ENCODE measurements at regions of chr20 and their contacts with region 1.

Region 1: GRCh38 chr20:34562643-34563042 is 4.1 kb downstream of the MAP1LC3A start:
- DNase-seq: peak; percentile 39 to 51
- ATAC-seq: peak; percentile 48 to 67; a peak in 4 of 6 replicates
- H3K4me3 ChIP-seq: no peak overlapping the region
- H3K27ac ChIP-seq: no peak overlapping the region
- H3K4me1 ChIP-seq: peaks cover 10% of the 10 kb centered on the region; the same call in 2 of the 3 replicates
- CTCF ChIP-seq: peak; percentile 24; the same call in 2 of the 3 replicates
- EP300 ChIP-seq: no peak
- POLR2A ChIP-seq: no peak
- RAD21 ChIP-seq: peak; percentile 36; a peak in 4 of 5 replicates

Region 2: DNA sequence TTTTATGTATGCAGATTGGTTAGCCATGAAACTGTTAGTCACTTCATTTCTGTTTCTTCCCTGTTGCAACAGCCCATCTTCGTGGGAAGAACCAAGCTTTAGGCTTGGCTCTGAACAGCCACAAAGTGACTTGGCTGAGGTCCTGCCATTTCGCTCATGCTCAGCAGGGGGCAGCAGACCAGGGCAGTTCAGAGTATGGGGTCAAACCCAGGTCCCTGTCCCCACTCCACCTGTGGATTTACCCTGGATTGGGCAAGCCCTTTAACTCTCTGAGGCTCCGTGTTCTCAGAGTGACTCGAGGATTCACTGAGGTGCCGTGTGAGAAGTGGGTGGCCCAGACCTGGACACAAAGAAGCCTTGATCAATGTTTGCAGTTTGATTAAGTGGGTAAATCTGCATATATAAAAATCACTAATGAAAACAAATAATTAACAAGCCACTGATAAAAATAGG is 23.9 kb before region 1 on chr20:
- CTCF ChIA-PET with region 1: interaction called, 13 read pairs
- POLR2A ChIA-PET with region 1: no interaction called
- DNase-seq: peak in 1 of 2 experiments; percentile 64
- ATAC-seq: peak; percentile 52 to 69; a peak in 3 of 6 replicates
- H3K4me3 ChIP-seq: no peak overlapping the region
- H3K27ac ChIP-seq: no peak overlapping the region
- H3K4me1 ChIP-seq: no peaks in the 10 kb centered on the region
- CTCF ChIP-seq: peak; percentile 72
- EP300 ChIP-seq: no peak
- POLR2A ChIP-seq: no peak
- RAD21 ChIP-seq: peak; percentile 49 to 59

Region 3: DNA sequence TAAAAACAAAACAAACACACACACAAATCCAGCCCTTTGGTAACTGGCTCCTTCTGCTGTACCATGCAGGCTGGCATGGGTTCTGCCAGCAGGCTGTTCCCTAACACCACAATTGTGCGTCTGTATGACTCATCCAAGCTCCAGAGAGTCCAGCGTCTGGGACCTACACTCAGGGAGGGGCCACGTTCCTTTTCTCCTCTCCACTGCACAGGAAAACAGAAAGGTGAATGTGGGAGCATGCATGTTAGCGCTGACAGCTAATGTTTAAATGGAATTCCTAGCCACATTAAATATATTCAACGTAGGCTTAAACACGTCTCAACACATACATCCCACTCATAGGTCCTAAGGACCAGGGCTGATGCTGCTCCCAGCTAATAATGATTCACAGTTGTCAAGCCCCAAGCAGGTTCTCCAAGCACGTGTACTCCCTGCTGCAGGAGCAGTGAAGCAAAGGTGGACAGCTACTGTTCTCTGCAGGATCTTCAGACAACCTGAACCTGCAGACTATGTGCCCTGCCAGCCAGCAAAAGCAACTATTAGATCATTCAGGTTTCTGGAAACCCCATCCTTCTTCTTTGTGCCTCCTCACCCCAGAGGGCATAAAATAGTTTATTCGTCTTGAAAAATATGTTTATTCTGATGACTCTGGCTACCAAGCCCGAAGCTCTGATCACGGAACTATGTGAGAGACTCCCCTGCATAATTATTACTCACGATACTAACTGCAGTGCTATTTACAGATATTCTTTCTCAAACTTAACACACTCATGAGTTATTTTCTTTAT is 16.7 kb after region 1 on chr20:
- CTCF ChIA-PET with region 1: interaction called, 26 read pairs
- POLR2A ChIA-PET with region 1: interaction called, 3 read pairs
- DNase-seq: peak in 1 of 2 experiments; percentile 69
- ATAC-seq: peak; percentile 91 to 96
- H3K4me3 ChIP-seq: no peak overlapping the region
- H3K27ac ChIP-seq: no peak overlapping the region
- H3K4me1 ChIP-seq: peaks cover 15% of the 10 kb centered on the region; the same call in 2 of the 3 replicates
- CTCF ChIP-seq: peak; percentile 82
- EP300 ChIP-seq: no peak
- POLR2A ChIP-seq: no peak
- RAD21 ChIP-seq: peak; percentile 93 to 94

Measured in A549 (cell line).